CD8-positive, alpha-beta T cell (primary cell): ENCODE measurements at regions of chr2 and their contacts with region 1.

Region 1: DNA sequence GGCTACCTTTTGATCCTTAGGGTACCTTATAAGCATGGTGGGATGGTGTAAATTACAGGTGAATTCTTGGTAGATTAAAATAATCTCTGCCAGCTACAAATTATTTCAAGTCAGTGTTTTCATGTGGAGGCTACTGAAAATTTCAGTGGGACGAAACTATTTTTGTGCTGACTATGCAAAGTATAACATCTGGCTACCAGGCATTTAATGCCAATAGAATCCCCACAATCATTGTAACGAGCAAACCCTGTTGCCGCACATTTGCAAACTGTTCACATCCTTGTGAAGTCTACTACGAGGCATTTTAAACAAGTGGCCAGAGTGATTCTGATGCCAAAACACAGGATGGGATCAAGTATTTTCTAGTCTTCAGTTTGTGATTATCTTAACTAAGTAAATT is 48.1 kb upstream of the SDC1 start:
- DNase-seq: no peak
- ATAC-seq: no peak
- H3K4me3 ChIP-seq: no peak overlapping the region
- H3K4me3 Mint-ChIP-seq: no peak overlapping the region
- H3K27ac ChIP-seq: no peak overlapping the region
- H3K27ac Mint-ChIP-seq: no peak overlapping the region
- H3K4me1 ChIP-seq: no peaks in the 10 kb centered on the region
- H3K4me1 Mint-ChIP-seq: peaks cover 24% of the 10 kb centered on the region
- H3K27me3 ChIP-seq: no peaks in the 10 kb centered on the region
- H3K27me3 Mint-ChIP-seq: no peaks in the 10 kb centered on the region
- CTCF ChIP-seq: no peak

Region 2: DNA sequence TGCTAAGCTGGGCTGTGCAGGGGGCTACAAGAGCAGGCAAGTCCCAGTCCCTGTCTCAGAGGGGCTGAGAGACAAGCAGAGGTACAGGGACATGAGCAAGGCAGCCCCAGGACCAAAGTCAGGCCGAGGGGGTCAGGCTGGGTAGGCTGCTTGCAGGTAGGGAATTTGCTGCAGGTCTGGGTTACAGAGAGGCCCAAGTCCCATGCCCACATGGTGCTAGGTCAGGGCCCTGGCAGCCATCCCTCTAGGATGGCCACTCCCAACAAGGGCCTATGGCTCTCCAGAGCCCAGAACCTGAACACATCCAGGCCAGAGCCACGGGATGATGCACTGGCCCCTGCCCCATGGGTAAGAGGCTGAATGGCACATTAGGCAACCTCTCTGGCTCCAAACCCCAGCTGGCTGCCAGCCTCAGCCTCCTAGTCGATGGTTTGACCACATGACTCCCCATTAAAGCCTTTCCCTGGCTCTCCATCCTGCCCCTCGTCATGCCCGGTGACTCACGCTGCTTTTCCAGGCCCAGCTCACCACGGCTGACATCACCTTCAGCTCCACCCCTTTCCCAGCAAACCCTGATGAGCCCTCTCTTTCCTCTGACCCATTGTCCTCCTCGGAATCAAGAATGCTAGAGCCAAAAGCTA is 131.8 kb before region 1 on chr2:
- CTCF ChIA-PET with region 1: no interaction called
- POLR2A ChIA-PET with region 1: no interaction called
- intact Hi-C with region 1: no loop called
- DNase-seq: no peak
- ATAC-seq: no peak
- H3K4me3 ChIP-seq: no peak overlapping the region
- H3K4me3 Mint-ChIP-seq: no peak overlapping the region
- H3K27ac ChIP-seq: no peak overlapping the region
- H3K27ac Mint-ChIP-seq: no peak overlapping the region
- H3K4me1 ChIP-seq: no peaks in the 10 kb centered on the region
- H3K4me1 Mint-ChIP-seq: no peaks in the 10 kb centered on the region
- H3K27me3 ChIP-seq: no peaks in the 10 kb centered on the region
- H3K27me3 Mint-ChIP-seq: no peaks in the 10 kb centered on the region
- CTCF ChIP-seq: no peak

Region 3: GRCh38 chr2:20294231-20294630 is 21.2 kb after region 1 on chr2:
- CTCF ChIA-PET with region 1: no interaction called
- POLR2A ChIA-PET with region 1: no interaction called
- intact Hi-C with region 1: loop called in 1 of 2 experiments (anchors 2 kb)
- DNase-seq: no peak
- ATAC-seq: no peak
- H3K4me3 ChIP-seq: no peak overlapping the region
- H3K4me3 Mint-ChIP-seq: no peak overlapping the region
- H3K27ac ChIP-seq: no peak overlapping the region
- H3K27ac Mint-ChIP-seq: no peak overlapping the region
- H3K4me1 ChIP-seq: no peaks in the 10 kb centered on the region
- H3K4me1 Mint-ChIP-seq: peaks cover 23% of the 10 kb centered on the region
- H3K27me3 ChIP-seq: no peaks in the 10 kb centered on the region
- H3K27me3 Mint-ChIP-seq: no peaks in the 10 kb centered on the region
- CTCF ChIP-seq: no peak

Region 4: DNA sequence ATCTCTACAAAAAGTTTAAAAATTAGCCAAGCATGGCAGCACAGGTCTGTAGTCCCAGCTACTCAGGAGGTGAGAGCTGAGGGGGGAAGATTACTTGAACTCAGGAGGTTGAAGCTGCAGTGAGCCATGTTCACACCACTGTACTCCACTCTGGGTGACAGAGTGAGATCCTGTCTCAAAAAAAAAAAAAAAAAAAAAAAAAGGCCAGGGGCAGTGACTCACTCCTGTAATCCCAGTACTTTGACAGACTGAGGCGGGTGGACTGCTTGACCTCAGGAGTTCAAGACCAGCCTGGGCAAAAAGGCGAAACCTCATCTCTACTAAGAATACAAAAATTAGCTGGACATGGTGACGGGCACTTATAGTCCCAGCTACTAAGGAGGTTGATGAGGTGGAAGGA is 40.6 kb after region 1 on chr2:
- CTCF ChIA-PET with region 1: no interaction called
- POLR2A ChIA-PET with region 1: no interaction called
- intact Hi-C with region 1: no loop called
- DNase-seq: no peak
- ATAC-seq: no peak
- H3K4me3 ChIP-seq: no peak overlapping the region
- H3K4me3 Mint-ChIP-seq: no peak overlapping the region
- H3K27ac ChIP-seq: no peak overlapping the region
- H3K27ac Mint-ChIP-seq: peak overlapping the region; percentile 32
- H3K4me1 ChIP-seq: peaks cover 4% of the 10 kb centered on the region
- H3K4me1 Mint-ChIP-seq: peaks cover 42% of the 10 kb centered on the region
- H3K27me3 ChIP-seq: no peaks in the 10 kb centered on the region
- H3K27me3 Mint-ChIP-seq: no peaks in the 10 kb centered on the region
- CTCF ChIP-seq: no peak